Activated naive CD4-positive, alpha-beta T cell treated with anti-CD3 and anti-CD28 coated beads for 36 hours (primary cell): ENCODE measurements at regions of chr7 and their contacts with region 1.

Region 1: GRCh38 chr7:33744293-33745075 is 160.9 kb upstream of the BMPER start:
- DNase-seq: no peak
- H3K4me3 Mint-ChIP-seq: no peak overlapping the region
- H3K27ac Mint-ChIP-seq: no peak overlapping the region
- H3K4me1 Mint-ChIP-seq: no peaks in the 10 kb centered on the region
- H3K27me3 Mint-ChIP-seq: no peaks in the 10 kb centered on the region

Region 2: GRCh38 chr7:33185786-33186185 is 558.7 kb before region 1 on chr7:
- CTCF ChIA-PET with region 1: no interaction called
- intact Hi-C with region 1: loop called (anchors 2 kb)
- DNase-seq: peak; percentile 15
- H3K4me3 Mint-ChIP-seq: no peak overlapping the region
- H3K27ac Mint-ChIP-seq: no peak overlapping the region
- H3K4me1 Mint-ChIP-seq: peaks cover 8% of the 10 kb centered on the region
- H3K27me3 Mint-ChIP-seq: no peaks in the 10 kb centered on the region

Region 3: GRCh38 chr7:33243319-33243881 is 501.1 kb before region 1 on chr7:
- CTCF ChIA-PET with region 1: no interaction called
- intact Hi-C with region 1: loop called (anchors 5 kb)
- DNase-seq: no peak
- H3K4me3 Mint-ChIP-seq: no peak overlapping the region
- H3K27ac Mint-ChIP-seq: no peak overlapping the region
- H3K4me1 Mint-ChIP-seq: no peaks in the 10 kb centered on the region
- H3K27me3 Mint-ChIP-seq: no peaks in the 10 kb centered on the region